Lower leg skin (tissue), 4 donors: ENCODE measurements at regions of chr11 and their contacts with region 1.

Region 1: GRCh38 chr11:125404776-125405435 is 91.2 kb downstream of the FEZ1 start:
- DNase-seq: peak; percentile 38 to 94
- H3K4me3 ChIP-seq: no peak overlapping the region
- CTCF ChIP-seq: no peak
- POLR2A ChIP-seq: no peak

Region 2: GRCh38 chr11:123719452-123719851 is 1685.5 kb before region 1 on chr11:
- intact Hi-C with region 1: no loop called
- DNase-seq: no peak
- H3K4me3 ChIP-seq: no peak overlapping the region
- CTCF ChIP-seq: no peak
- POLR2A ChIP-seq: no peak

Region 3: DNA sequence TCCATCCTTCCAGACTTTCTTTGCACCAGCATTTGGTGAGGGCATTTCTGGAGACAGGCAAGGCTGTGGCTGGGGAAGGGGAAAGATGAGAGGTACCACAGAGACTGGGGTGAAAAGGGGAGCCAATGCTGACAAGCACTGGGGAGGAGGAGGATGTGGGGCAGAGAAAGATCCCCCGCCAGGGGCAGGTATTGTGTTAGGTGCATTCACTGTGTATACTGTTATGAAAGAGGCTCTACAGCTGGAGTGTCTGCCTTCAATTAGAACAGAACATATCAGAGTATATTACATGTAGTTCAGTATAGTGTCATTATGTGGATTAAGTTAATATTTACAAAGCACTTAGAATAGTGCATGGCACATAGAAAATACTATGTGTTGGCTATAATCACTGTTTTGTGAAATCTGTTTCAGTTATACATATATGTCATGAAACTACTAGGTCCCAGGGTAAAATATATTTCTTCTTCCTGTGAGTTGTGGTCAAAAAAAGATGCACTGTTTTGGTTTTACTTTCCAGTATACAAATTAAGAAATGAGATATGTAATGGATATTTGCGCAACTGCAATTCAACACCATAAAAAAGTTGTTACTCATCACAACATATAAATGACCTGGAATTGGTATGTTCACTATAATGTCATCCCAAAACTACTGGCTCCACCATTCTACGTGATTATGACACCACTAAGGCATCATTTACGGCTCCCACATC is 613.1 kb before region 1 on chr11:
- intact Hi-C with region 1: no loop called
- DNase-seq: no peak
- H3K4me3 ChIP-seq: no peak overlapping the region
- CTCF ChIP-seq: no peak
- POLR2A ChIP-seq: no peak

Region 4: GRCh38 chr11:125164422-125165110 is 240.3 kb before region 1 on chr11 and contains the start of gene PKNOX2:
- intact Hi-C with region 1: loop called (anchors 5 kb)
- DNase-seq: peak; percentile 30 to 94
- H3K4me3 ChIP-seq: peak within 1 kb of the TSS; percentile 33
- CTCF ChIP-seq: no peak
- POLR2A ChIP-seq: no peak
- total RNA-seq, gene PKNOX2: 1.5 to 4.6 (median 2.8) TPM

Region 5: DNA sequence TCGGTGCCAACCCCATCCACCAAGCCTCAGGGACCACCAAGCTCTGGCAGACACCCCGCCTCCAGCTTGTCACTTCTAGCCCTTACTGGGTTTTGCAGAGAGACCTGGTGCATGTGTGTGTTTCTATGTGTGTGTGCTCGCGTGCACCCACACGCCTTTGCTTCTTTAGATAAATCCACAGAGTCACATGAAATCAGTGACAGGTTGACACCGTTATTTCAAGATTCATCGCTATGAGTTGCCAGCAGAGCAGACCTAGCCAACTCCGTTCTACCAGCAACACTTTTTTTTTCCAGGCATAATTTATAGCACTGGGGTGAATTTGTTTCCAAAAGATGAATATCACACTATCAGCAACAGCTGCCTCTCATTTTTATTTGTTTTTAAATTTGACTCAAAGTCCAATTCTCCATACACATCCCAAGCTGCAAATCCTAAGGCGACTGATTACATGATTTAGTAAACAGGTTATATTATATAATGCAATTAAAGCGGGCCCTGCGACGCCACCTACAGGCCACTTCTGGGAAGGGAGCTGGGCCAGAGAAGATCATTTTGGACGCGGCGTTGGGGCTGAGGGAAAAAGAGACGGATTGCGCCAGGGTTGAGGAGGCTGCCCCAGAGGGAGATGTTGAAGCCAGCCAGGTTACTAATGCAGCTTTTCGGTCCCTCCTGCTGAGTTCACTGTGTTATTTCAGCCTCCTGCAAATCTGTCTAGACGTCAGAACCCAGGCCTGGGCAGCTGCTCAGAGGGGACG is 59.3 kb before region 1 on chr11:
- intact Hi-C with region 1: no loop called
- DNase-seq: peak; percentile 72 to 94
- H3K4me3 ChIP-seq: no peak overlapping the region
- CTCF ChIP-seq: peak in 1 of 3 donors; percentile 31
- POLR2A ChIP-seq: no peak